HEK293 (cell line): ENCODE measurements at regions of chr11 and their contacts with region 1.

Region 1: DNA sequence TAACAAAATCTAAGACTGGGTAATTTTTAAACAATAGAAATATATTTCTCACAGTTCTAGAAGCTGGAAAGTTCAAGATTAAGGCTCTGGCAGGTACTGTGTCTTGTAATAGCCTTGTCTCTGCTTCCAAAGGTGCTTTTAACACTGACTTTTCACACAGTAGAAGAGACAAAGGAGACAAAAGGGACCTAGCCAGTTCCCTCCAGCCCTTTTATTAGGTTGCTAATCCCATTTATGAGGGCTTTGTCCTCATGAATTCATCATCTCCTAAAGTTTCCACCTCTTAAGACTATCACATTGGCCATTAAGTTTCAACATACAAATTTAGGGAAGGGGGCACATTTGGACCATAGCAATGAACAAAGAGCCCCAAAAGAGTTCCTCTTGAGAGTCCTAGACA is 40.7 kb downstream of the FAM181B start:
- H3K4me3 ChIP-seq: no peak overlapping the region
- H3K27ac ChIP-seq: no peak overlapping the region
- H3K4me1 ChIP-seq: no peaks in the 10 kb centered on the region
- CTCF ChIP-seq: no peak

Region 2: DNA sequence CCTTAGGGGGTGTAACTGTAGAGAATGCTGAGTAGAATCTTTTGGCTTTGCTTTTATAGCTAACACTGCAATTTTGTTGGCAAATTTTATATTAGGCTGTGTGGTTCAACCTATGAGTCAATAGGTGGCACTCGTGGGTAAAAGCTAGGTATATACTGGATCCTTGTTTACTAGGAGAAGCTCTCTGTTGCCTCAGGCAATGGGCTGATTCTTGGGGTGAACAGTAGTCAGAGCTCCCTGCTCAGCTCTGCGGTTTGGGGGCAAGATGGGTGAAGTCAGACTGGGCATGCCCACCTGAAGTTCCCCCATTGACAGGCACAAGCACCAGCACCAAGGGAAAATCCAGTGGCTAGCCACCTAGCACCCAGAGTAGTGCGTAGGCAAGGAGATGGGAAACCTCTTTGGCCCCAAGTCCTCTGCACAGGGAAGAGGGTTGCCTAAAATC is 198.0 kb before region 1 on chr11:
- CTCF ChIA-PET with region 1: interaction called, 27 read pairs
- POLR2A ChIA-PET with region 1: no interaction called
- H3K4me3 ChIP-seq: no peak overlapping the region
- H3K27ac ChIP-seq: no peak overlapping the region
- H3K4me1 ChIP-seq: no peaks in the 10 kb centered on the region
- CTCF ChIP-seq: no peak

Region 3: GRCh38 chr11:82559609-82560008 is 133.4 kb before region 1 on chr11:
- CTCF ChIA-PET with region 1: no interaction called
- POLR2A ChIA-PET with region 1: no interaction called
- H3K4me3 ChIP-seq: no peak overlapping the region
- H3K27ac ChIP-seq: no peak overlapping the region
- H3K4me1 ChIP-seq: no peaks in the 10 kb centered on the region
- CTCF ChIP-seq: no peak

Region 4: GRCh38 chr11:82653752-82654151 is 39.2 kb before region 1 on chr11:
- CTCF ChIA-PET with region 1: no interaction called
- POLR2A ChIA-PET with region 1: no interaction called
- H3K4me3 ChIP-seq: no peak overlapping the region
- H3K27ac ChIP-seq: no peak overlapping the region
- H3K4me1 ChIP-seq: no peaks in the 10 kb centered on the region
- CTCF ChIP-seq: no peak

Region 5: GRCh38 chr11:83156150-83156995 is 463.4 kb after region 1 on chr11:
- CTCF ChIA-PET with region 1: no interaction called
- POLR2A ChIA-PET with region 1: no interaction called
- H3K4me3 ChIP-seq: peak overlapping the region; percentile 62
- H3K27ac ChIP-seq: peak overlapping the region; percentile 59
- H3K4me1 ChIP-seq: peaks cover 2% of the 10 kb centered on the region; the same call in 1 of the 2 replicates
- CTCF ChIP-seq: no peak